HEK293T (cell line): ENCODE measurements at regions of chr16 and their contacts with region 1.

Region 1: DNA sequence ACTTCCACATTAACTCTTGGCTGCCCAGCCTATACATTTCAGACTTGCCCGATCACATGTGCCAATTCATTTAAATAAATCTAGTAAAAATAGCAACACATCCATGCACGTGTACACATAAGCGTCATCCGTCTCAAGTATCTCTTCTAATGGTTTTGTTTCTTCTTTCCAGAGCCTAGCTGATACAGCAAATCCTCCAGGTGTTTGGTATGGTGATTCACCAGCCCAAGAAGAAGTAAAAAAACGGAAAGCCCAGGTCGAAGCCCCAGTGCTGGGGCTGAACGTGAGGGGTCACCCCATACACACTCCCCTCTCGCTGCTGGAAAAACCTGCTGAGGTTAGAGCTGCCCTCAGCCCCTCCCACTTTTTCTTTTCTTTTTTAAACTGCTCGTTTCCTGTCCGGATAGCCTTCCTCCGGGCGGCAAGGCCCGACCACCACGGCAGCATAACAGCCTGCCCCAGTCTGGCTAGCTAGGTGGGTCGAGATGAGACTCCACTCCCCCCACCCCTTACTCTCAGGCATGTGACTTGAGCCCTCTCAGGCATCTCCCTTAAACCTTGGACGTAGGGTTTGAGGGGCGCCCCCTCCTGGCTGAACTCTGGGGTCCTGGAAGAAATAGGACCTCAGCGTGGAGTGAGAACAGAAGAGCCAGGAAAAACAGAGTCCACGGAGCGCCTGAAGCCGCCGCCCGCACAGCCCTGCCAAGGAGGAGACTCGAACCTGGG is 13.9 kb upstream of the OR1F1 start:
- DNase-seq: peak; percentile 66

Region 2: DNA sequence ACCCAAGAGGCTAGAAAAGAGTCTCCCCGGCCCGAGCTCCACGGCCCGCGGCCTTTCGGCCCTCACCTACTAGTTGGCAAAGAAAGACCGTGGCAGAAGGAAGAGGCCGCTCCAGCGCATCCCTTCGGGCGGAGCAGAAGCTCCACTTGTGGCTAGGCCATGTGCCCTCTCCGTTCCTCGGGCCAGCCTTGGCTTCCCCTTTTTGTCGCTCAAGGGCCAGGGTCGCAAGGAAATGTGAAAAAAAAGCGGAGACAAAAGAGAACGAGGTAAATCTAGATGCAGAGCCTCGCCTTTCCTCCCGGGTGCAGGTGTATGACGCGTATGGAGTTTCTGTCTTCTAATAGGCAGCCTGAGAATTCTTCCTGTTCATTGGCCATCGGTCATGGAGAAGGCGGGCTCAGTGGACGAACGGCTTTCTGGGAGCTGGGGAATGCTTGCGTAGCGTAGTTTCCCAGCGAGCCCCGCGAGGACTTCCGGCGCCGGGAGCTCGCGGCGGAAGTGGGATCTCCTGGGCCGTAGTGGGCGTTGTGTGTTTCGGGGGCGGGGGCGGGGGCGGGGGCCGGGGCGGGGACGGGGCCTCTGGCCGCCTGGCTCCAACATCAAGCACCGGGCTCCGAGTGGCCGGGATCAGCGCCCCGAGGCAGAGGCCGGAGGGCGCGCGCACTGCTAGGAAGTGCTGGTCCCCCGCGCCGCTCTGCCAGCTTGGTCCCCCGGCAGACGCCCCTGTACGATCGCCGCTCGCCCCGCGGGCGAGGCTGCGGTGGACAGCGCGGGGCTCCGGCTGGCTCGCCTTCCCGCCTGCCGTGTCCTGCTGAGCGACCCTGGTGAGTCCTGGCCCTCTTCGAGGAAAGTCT is 39.3 kb before region 1 on chr16 and contains the start of gene ZNF213:
- CTCF ChIA-PET with region 1: interaction called, 3 read pairs
- POLR2A ChIA-PET with region 1: interaction called, 10 read pairs
- DNase-seq: peak; percentile 90

Region 3: GRCh38 chr16:3150346-3151218 is 23.5 kb before region 1 on chr16:
- CTCF ChIA-PET with region 1: interaction called, 9 read pairs
- POLR2A ChIA-PET with region 1: interaction called, 10 read pairs
- DNase-seq: peak; percentile 95

Region 4: GRCh38 chr16:3158471-3159314 is 15.4 kb before region 1 on chr16:
- CTCF ChIA-PET with region 1: interaction called, 7 read pairs
- POLR2A ChIA-PET with region 1: interaction called, 11 read pairs
- DNase-seq: peak; percentile 77

Region 5: DNA sequence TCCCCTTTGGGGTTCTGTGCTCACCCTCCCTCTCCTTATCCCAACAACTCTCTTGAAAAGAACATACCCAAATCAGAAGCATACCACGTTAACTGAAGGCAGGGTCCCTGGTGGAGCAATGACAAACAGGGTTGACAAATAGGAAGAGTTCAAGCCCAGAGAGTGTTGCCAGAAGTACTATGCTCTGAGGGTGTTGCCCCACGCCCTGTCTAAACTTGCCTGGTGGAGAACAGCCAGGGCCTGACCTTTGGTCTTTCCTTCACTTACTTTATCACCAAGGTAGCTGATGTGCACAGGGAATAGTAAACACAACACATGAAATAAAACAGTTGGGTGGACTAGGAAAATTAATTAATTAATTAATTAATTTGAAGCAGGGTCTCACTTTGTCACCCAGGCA is 154.6 kb after region 1 on chr16:
- CTCF ChIA-PET with region 1: no interaction called
- POLR2A ChIA-PET with region 1: no interaction called
- DNase-seq: no peak